ENCODE measurements at regions of chr7 and their contacts with region 1.

Region 1: GRCh38 chr7:47179812-47180515 is 401.9 kb downstream of the TNS3 start:
- DNase-seq: no peak

Region 2: DNA sequence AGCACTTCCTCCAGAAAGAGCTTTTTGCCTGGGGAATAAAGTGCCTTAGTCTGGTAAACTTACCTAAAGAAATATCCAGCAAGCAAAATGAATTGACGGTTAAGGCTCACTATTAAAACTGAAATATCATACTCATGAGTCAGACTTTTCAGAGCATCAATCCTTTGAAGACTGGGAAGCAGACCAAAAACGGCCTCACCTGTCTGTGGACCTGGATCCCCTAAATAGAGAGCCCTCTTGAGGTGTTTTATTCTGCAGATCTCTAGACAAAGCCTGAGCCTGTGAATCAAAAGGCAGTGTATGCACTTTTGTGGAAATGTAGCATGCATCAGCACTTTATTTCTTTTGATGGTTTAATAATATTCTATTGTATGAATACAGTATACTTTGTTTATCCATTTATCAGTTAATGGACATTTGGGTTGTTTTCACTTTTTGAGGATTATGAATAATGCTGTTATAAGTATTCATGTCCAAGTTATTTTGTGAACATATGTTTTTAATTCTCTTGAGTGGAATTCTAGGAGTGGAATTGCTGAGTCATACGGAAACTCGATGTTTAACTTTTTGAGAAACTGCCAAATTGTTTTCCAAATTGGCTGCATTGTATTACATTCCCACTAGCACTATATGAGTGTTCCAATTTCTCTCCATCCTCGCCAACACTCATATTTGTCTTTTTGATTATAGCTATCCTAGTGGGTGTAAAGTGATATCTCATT is 809.9 kb before region 1 on chr7:
- intact Hi-C with region 1: loop called (anchors 10 kb)
- DNase-seq: no peak

Region 3: DNA sequence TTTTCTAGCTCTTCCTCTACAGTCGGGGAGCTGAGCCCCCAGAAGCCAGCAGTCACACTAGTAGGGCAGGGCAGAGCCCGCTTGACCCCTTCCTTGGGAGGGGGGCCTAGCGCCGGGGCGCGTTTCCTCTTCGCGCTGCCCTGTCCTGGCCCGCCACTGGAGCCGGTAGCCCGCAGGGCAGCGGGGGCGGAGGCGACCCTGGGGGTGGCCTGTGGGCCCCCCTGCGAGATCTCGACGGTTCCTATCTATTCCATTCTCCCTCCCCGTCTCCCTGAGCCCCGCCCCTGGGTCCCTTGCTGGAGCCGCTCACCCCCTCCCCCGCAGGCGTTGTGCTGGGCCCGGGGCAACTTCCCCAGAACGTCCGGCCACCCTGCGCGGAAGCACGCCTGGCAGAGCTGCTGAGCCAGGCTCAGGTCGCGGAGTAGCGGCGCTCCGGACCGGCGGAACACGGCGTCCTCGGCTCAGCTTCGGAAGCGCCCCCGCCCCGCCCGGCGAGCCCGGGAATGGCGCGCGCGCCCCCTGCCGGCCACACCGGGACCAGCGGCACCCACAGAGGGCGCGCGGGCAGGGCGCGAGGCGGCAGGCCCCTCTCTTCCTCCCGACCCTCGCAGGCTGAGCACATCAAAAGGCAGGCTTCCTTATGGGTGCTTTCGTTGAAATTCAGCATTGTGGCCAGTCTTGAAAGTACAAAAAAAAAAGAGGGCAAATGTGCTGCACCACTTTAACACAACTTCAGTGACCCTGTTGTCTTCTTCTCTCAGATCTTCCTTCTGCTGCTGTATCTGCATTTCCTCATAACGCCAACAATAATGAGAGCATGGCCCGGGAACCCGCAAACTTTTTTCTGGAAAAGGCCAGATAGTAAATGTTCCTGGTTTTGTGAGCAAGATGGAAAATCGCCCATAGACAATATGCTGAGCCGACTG is 74.4 kb after region 1 on chr7:
- intact Hi-C with region 1: loop called (anchors 5 kb)
- DNase-seq: peak; percentile 89